Posterior vena cava (tissue), 2 donors: ENCODE measurements at regions of chr17 and their contacts with region 1.

Region 1: DNA sequence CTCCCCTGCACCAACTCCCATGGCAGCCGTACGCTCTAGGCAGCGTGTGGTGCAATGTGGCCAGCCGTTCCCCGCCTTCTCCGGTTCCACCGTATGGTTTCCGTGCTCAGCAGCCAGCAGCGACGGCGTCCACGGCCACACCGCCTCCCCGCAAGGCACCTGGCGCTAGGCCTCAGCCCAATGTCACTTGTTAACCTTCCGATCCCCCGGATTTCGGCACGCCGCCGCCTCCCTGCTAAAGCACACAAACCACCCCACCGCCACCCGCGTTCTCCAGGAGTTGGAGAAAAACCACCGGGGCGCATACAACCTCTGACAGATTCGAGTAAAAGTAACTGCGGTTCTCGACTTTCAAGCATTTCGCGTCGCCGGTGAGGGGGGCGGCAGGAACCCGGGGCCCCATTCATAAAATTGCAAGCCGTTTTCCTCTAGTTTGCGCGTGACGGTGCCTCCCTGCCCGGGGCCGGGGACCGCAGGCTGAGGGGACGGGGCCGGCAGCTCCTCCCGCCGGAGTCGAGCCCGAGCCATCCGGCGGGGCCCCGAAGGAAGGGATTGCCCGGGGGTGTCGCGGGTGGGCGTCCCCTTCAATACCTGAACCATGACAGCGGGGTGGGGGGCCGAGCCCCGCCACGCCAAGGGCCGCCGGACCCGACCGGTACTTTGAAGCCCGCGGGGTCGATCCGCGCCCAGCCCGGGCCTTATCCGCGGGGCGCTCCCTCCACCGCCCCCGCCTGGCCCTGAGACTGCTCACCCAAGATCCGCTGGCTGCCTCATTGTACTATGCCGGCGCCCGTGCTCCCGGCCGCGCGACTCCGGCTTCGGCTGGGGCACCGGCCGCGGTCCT is at the start of gene TEX2:
- DNase-seq: peak; percentile 85
- total RNA-seq, gene TEX2: 24.6 to 27.4 TPM

Region 2: DNA sequence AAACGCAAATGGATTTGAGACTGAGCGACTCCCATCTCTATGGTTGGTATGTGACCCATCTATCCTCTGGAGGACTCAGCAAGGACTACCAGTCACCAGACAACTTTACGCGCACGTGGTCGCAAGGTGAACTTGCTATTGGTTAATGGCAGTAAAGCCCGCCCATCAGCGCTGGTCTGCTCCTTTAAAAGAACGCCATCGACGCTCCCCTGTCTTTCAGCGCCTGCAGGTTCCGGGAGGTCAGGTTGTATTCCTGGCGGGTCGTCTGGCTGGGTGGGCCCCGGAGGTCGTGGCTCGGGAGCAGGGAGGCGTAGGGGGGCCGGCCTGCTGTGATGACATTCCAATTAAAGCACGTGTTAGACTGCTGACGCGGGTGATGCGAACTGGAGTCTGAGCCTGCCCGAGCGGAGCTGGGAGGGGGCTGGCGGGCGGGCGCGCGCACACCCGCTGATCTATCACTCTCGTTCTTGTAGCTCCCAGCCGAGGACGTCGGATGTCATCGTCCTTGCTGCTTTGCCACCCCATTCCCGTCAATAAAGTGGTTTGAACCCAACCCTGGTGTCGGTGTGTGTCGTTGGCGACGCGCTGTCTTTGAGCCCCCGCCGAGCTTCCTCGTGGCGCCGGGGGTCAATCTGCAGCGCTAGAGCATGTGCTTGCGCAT is 116.8 kb before region 1 on chr17:
- intact Hi-C with region 1: loop called in 1 of 2 experiments (anchors 10 kb)
- DNase-seq: peak; percentile 99

Region 3: GRCh38 chr17:66240630-66241029 is 1978.0 kb after region 1 on chr17:
- intact Hi-C with region 1: no loop called
- DNase-seq: no peak